OCI-LY7 (cell line): ENCODE measurements at regions of chr2 and their contacts with region 1.

Region 1: DNA sequence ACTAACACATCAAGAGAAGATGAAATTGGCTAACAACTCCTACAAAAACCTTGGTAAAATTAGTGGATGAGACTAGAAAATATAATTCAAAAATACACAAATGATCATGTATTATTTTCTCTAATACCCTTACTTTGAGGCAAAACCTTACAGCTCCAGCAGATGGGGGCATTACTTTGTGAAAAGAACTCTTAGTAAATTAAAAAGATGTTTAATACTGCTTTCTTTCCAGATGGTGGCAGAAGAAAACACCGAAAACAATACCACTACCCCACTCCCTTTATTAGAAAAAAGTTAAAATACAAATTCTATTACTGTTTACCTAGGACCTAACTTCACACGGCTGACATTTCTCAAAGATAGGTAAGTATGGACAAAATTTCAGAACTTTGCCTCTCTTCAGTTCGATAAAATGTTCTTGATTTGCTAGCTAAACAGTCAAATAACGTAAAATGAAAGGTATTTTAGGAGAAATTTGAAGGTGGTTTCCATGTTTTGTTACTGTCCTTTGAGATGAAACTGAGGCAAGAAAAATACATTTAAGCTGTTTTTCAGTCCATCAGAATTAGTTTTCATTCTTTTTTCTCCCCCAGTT is 30.6 kb downstream of the ORC4 start:
- DNase-seq: peak; percentile 64
- H3K4me3 ChIP-seq: no peak overlapping the region
- H3K27ac ChIP-seq: no peak overlapping the region
- H3K4me1 ChIP-seq: no peaks in the 10 kb centered on the region
- CTCF ChIP-seq: peak; percentile 97

Region 2: GRCh38 chr2:148201075-148202004 is 211.4 kb after region 1 on chr2:
- CTCF ChIA-PET with region 1: no interaction called
- POLR2A ChIA-PET with region 1: no interaction called
- intact Hi-C with region 1: loop called (anchors 5 kb)
- DNase-seq: peak; percentile 40
- H3K4me3 ChIP-seq: no peak overlapping the region
- H3K27ac ChIP-seq: no peak overlapping the region
- H3K4me1 ChIP-seq: no peaks in the 10 kb centered on the region
- CTCF ChIP-seq: peak; percentile 66

Region 3: GRCh38 chr2:148509288-148509902 is 519.5 kb after region 1 on chr2:
- CTCF ChIA-PET with region 1: interaction called, 7 read pairs
- POLR2A ChIA-PET with region 1: interaction called, 5 read pairs
- intact Hi-C with region 1: loop called (anchors 1 kb)
- DNase-seq: peak; percentile 80
- H3K4me3 ChIP-seq: peak overlapping the region; percentile 26
- H3K27ac ChIP-seq: no peak overlapping the region
- H3K4me1 ChIP-seq: no peaks in the 10 kb centered on the region
- CTCF ChIP-seq: peak; percentile 94

Region 4: DNA sequence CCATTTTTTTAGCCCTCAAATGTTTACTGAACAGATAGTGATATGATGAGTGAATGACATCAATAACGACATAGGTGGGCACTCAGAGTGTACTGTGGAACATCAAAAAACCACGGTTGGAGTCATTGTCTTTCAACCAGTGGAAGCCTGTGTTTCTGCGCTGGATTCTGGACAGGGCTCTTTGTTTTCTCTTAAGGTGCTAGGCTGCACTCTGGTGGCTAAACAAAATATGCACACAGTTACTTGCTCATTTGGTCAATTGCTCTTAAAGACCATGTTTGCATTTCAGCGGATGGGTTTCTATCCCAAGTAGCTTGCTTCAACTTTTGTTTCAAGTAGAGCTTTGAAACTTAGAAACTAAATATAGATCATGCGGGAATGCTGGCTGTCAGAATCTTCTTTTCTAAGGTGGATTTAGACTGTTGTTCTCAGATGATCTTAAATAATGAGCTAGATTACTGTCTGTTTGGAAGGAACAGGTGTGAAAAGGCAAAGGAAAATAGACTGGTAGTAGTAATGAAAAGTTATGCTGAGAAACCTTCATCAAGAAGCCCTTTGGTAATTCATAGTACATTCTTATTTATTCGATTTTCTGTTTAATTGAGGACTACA is 1000.1 kb after region 1 on chr2:
- CTCF ChIA-PET with region 1: no interaction called
- POLR2A ChIA-PET with region 1: interaction called, 3 read pairs
- intact Hi-C with region 1: loop called (anchors 10 kb)
- DNase-seq: peak; percentile 68
- H3K4me3 ChIP-seq: no peak overlapping the region
- H3K27ac ChIP-seq: no peak overlapping the region
- H3K4me1 ChIP-seq: no peaks in the 10 kb centered on the region
- CTCF ChIP-seq: peak; percentile 85